ENCODE measurements at regions of chr1 and their contacts with region 1.

Region 1: DNA sequence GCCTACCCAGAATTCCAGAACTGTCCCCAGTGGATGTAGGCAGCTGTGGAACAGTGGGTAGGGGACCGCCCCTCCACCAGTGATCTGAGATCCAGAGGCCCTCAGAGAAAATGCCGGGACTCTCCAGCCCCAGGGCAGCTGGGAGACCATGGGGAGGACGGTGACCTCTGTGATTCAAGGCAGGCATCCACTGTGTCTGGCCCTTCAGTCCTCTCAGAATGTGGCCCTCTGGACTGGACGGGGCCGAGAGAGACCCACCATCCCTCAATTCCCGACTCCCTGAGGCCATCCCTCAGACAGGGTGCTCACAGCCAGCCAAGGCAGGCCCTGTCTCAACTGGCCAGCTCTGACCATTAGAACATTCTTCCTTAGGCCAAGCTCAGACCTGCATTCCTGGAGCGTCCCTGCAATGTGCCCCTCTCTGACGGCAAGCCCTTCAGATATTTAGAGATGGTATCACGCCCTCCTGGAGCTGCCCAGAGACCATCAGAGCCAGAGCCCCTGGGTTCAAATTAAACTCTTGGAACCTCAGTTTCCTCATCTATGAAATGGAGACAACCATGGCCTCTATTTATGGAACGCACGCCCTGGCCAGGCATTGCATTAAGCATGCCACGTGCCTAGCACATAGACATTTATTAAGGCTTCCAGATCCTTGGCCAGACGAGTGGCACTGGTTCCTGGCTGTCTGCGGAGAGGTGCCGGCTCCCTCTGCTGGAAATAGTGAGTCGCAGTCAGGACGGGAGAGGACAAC is 9.6 kb upstream of the EPS8L3 start:
- DNase-seq: peak; percentile 89
- H3K4me3 ChIP-seq: no peak overlapping the region
- H3K27ac ChIP-seq: no peak overlapping the region
- H3K4me1 ChIP-seq: no peaks in the 10 kb centered on the region
- H3K27me3 ChIP-seq: no peaks in the 10 kb centered on the region
- CTCF ChIP-seq: peak; percentile 68 to 98 (median 94)
- POLR2A ChIP-seq: no peak

Region 2: DNA sequence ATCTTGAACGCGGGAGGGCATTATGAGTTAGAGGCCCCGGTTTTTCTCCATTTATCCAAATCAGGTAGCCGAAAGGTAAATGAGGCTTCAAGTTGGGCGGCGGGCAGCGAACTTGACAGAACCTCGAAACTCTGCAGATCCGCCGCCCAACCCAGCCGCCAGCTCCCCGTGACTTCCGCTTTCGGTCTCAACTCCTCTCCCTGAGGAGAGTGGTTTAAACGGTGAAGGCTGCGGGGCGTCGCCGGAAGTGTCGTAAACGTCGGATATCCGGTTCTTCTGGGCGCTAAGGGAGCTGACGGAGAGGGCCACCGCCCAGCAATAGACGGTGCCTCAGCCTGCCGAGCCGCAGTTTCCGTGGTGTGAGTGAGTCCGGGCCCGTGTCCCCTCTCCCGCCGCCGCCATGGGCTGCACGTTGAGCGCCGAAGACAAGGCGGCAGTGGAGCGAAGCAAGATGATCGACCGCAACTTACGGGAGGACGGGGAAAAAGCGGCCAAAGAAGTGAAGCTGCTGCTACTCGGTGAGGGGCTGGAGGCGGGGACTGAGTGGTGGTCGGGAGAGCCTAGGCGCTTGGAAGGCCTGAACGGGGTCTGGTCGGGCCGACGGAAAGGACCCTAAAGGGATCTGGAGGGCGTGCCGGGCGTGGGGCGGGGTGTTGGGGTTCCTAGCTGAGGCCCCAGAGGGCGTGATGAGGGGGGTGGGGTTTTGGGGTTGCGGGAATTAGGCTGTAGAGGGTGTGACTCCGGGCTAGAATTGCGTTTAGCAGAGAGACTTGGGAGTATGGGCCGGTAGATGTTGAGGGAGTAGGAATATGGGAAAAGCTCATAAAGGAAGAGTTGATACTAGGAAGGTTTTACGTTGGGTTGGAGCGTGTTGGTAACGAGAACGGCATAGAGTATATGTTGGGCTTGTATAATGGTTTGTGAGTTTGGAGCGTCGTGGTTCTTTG is 224.7 kb before region 1 on chr1 and contains the start of gene GNAI3:
- intact Hi-C with region 1: loop called (anchors 2 kb)
- DNase-seq: peak; percentile 97
- H3K4me3 ChIP-seq: peak within 1 kb of the TSS; percentile 71 to 76
- H3K27ac ChIP-seq: peak within 1 kb of the TSS; percentile 95 to 96
- H3K4me1 ChIP-seq: no peaks in the 10 kb centered on the region
- H3K27me3 ChIP-seq: no peaks in the 10 kb centered on the region
- CTCF ChIP-seq: peak in 1 of 4 experiments; percentile 11
- POLR2A ChIP-seq: peak; percentile 99
- total RNA-seq, gene GNAI3: 5.1 to 5.4 TPM

Region 3: DNA sequence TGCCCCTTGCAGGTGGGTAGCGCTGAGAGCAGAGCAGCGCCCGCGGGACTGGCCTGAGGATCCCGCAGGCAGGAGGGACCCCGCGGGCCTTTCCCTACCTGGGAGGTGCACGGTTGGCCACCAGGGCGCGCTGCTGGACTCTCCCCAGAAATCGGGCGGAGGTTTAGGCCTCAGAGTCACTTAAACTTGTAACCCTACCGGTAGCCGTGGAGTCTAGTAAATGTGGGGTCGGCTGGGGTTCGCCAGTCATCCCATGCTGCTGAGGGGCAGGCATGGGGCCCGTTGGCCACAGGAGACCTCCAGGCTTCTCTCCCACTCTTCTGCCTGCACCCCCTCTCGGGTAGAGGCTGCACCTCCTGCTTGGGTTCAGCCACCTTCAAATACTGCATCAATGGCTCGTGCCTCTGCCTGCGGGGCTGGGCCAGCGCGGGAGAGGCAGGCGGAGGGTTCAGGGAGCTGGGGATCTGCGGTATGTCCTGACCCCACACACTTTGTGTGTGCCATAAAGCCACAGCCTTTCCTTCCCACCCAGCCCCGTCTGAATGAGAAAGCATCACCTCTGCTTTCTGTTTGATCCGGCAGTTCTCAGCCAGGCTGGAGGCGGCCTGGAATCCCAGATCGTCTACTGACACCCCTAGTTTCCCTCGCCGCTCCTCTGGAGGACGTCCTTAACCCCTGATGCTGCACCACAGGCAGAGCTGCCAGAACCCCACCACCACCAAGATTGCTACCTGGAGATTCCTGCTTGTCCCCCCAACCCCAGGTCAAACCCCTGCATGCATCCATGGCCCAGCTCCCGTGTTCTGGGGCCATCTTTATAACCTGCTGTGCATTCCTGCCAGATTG is 129.7 kb before region 1 on chr1:
- intact Hi-C with region 1: loop called (anchors 5 kb)
- DNase-seq: peak; percentile 76
- H3K4me3 ChIP-seq: no peak overlapping the region
- H3K27ac ChIP-seq: no peak overlapping the region
- H3K4me1 ChIP-seq: no peaks in the 10 kb centered on the region
- H3K27me3 ChIP-seq: no peaks in the 10 kb centered on the region
- CTCF ChIP-seq: peak; percentile 69 to 88 (median 86)
- POLR2A ChIP-seq: no peak

Region 4: GRCh38 chr1:109667452-109668122 is 105.7 kb before region 1 on chr1 and contains the start of gene GSTM2:
- intact Hi-C with region 1: loop called (anchors 5 kb)
- DNase-seq: peak; percentile 86
- H3K4me3 ChIP-seq: peak within 1 kb of the TSS; percentile 45 to 47
- H3K27ac ChIP-seq: peak within 1 kb of the TSS; percentile 6 to 43
- H3K4me1 ChIP-seq: no peaks in the 10 kb centered on the region
- H3K27me3 ChIP-seq: no peaks in the 10 kb centered on the region
- CTCF ChIP-seq: no peak
- POLR2A ChIP-seq: peak; percentile 25
- total RNA-seq, gene GSTM2: 47.5 to 79.5 TPM

Region 5: DNA sequence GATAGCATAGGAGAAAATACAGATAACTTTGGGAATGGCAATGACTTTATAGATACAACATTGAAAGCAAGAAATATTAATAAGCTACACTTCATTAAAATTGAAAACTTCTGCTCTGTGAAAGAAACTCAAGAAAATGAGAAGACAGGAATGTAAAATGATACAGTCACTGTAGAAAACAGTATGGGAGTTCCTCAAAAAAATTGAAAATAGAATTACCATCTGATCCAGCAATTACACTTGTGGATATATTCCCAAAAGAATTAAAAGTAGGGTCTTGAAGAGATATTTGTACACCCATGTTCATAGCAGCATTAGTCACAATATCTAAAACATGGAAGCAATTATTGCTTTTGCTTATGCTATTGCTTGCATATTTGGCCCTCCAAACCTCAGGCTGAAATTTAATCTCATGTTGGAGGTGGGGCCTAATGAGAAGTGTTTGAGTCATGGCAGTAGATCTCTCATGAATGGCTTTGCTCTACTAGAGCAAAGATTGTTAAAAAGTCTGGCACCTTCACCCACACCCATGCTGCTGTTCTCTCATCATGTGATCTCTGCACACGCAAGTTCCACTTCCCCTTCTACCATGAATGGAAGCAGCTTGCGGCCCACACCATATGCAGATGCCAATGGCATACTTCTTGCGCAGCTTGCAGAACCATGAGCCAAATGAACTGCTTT is 196.0 kb after region 1 on chr1:
- intact Hi-C with region 1: no loop called
- DNase-seq: no peak
- H3K4me3 ChIP-seq: no peak overlapping the region
- H3K27ac ChIP-seq: no peak overlapping the region
- H3K4me1 ChIP-seq: no peaks in the 10 kb centered on the region
- H3K27me3 ChIP-seq: no peaks in the 10 kb centered on the region
- CTCF ChIP-seq: no peak
- POLR2A ChIP-seq: no peak

Measured in prostate gland (tissue), 2 donors.